ENCODE measurements at regions of chr2 and their contacts with region 1.

Region 1: DNA sequence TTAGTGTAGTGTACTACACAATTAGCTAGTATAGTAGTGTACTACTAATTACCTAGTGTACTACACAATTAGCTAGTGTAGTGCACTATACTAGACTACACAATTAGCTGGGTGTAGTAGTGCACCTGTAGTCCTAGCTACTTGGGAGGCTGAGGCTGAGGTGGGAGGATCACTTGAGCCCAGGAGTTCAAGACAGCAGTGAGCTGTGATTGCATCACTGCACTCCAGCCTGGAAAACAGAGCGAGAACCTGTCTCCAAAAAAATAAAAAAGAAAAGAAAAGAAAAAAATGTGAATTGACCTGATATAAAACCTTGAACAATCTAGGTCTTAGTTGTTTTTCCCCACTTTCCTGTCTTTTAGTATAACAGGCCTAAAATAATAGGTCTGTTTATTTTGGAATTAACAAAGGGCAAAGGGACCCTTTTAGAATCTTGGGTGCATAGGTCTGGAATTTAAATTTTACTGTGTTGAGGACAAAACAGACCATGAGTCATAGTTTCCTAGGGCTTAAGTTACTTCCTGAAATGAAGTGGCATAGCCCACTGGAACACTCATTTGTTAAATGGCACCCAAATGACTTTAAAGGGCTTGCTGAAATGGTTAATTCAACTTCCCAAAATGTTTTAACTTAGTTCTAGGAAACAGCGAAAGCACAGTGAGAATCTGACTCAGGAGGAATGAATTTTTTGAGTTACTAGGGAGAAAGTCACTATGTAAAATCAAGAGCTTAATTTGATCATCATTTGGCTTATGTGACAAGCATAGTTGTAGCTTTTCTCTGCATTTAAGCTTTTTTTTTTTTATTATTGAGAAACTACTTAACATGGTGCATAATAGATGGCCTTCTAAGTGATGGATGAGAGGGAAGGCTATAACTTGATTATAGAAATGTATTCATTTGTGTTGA is 50.7 kb upstream of the ARL5A start:
- DNase-seq: peak; percentile 95
- H3K4me3 ChIP-seq: no peak overlapping the region
- H3K27ac ChIP-seq: peak overlapping the region; percentile 30
- H3K4me1 ChIP-seq: peaks cover 22% of the 10 kb centered on the region
- H3K27me3 ChIP-seq: no peaks in the 10 kb centered on the region
- CTCF ChIP-seq: no peak
- POLR2A ChIP-seq: no peak

Region 2: DNA sequence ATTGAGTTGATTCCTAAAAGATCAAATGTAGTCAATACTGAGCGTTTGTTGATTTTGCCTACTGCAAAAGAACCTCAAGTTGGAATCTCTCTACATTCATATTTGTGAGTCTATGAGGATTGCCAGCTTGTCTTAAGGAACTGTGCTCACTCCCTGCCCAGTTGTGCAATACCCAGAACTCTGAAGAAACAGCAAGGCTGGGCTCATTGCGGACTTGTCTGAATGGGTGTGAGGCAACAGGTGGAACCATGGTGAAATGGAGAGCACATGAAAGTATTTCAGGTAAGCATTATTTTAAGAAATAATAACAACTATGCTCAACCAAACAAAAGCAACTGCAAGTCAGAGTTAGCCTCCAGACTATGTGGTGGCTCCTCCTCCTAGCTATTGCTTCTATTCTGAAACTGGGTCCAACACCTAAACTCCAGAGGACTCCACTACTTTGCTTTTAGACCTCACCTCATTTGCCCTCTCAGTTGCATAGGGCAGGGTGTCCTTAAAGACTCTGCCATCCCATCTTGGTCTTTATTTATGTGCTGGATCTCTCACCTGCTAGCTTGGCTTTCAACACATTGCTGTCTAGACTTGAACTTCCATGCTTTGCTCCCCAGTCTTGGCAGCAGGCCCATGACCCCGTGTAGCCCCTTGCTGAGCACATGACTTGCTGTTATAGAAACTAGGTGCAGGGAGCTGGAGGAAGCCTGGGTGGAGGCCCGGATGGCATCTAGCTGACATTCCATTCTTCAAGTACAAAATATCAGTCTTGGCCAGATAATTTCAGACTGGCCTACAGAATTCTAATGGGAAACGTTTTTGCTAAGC is 44.1 kb after region 1 on chr2:
- CTCF ChIA-PET with region 1: interaction called, 5 read pairs
- POLR2A ChIA-PET with region 1: no interaction called
- dilution Hi-C with region 1: no loop called
- intact Hi-C with region 1: loop called (anchors 1 kb)
- DNase-seq: peak; percentile 99
- H3K4me3 ChIP-seq: no peak overlapping the region
- H3K27ac ChIP-seq: peak overlapping the region; percentile 5
- H3K4me1 ChIP-seq: peaks cover 16% of the 10 kb centered on the region
- H3K27me3 ChIP-seq: peaks cover 5 to 11% of the 10 kb centered on the region in 2 experiments
- CTCF ChIP-seq: no peak
- POLR2A ChIP-seq: no peak

Measured in endothelial cell of umbilical vein (primary cell).